ENCODE measurements at regions of chr6 and their contacts with region 1.

Region 1: GRCh38 chr6:97186416-97186999 is 96.5 kb downstream of the MMS22L start:
- DNase-seq: peak; percentile 85
- H3K4me3 ChIP-seq: no peak overlapping the region
- H3K27ac ChIP-seq: no peak overlapping the region
- H3K4me1 ChIP-seq: peaks cover 36% of the 10 kb centered on the region
- H3K27me3 ChIP-seq: no peaks in the 10 kb centered on the region
- CTCF ChIP-seq: peak; percentile 96

Region 2: DNA sequence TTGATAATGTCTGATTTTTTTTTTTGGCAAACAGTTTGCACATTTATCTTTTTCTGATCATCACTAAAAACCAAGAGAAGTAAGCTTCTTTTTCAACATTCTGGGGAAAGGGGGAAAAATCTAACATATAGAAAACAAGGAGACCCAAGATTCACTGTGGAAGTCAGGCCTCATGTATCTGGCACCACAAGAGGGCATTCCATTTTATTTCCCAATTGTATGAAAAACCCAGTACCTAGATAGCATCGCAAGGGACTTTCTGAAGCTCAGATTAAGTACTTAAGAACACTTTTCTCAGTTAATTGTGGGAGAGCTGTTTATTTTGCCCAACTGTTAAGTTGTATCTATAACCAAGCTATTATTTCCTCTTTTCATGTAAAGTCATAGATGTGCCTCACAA is 109.1 kb before region 1 on chr6:
- CTCF ChIA-PET with region 1: no interaction called
- POLR2A ChIA-PET with region 1: no interaction called
- intact Hi-C with region 1: loop called (anchors 10 kb)
- DNase-seq: peak; percentile 24
- H3K4me3 ChIP-seq: no peak overlapping the region
- H3K27ac ChIP-seq: no peak overlapping the region
- H3K4me1 ChIP-seq: peaks cover 16% of the 10 kb centered on the region
- H3K27me3 ChIP-seq: no peaks in the 10 kb centered on the region
- CTCF ChIP-seq: peak; percentile 40

Region 3: GRCh38 chr6:97215157-97215769 is 28.8 kb after region 1 on chr6:
- CTCF ChIA-PET with region 1: interaction called, 15 read pairs
- POLR2A ChIA-PET with region 1: interaction called, 5 read pairs
- intact Hi-C with region 1: no loop called
- DNase-seq: peak; percentile 88
- H3K4me3 ChIP-seq: peak overlapping the region; percentile 3
- H3K27ac ChIP-seq: peak overlapping the region; percentile 57
- H3K4me1 ChIP-seq: peaks cover 20% of the 10 kb centered on the region
- H3K27me3 ChIP-seq: no peaks in the 10 kb centered on the region
- CTCF ChIP-seq: peak; percentile 78

Region 4: GRCh38 chr6:97394160-97394748 is 207.7 kb after region 1 on chr6:
- CTCF ChIA-PET with region 1: no interaction called
- POLR2A ChIA-PET with region 1: no interaction called
- intact Hi-C with region 1: loop called (anchors 1 kb)
- DNase-seq: peak; percentile 81
- H3K4me3 ChIP-seq: no peak overlapping the region
- H3K27ac ChIP-seq: no peak overlapping the region
- H3K4me1 ChIP-seq: no peaks in the 10 kb centered on the region
- H3K27me3 ChIP-seq: no peaks in the 10 kb centered on the region
- CTCF ChIP-seq: peak; percentile 89

Region 5: GRCh38 chr6:97497713-97498331 is 311.3 kb after region 1 on chr6:
- CTCF ChIA-PET with region 1: no interaction called
- POLR2A ChIA-PET with region 1: no interaction called
- intact Hi-C with region 1: loop called (anchors 10 kb)
- DNase-seq: peak; percentile 93
- H3K4me3 ChIP-seq: no peak overlapping the region
- H3K27ac ChIP-seq: peak overlapping the region; percentile 76
- H3K4me1 ChIP-seq: peaks cover 34% of the 10 kb centered on the region
- H3K27me3 ChIP-seq: no peaks in the 10 kb centered on the region
- CTCF ChIP-seq: peak; percentile 93

Region 6: DNA sequence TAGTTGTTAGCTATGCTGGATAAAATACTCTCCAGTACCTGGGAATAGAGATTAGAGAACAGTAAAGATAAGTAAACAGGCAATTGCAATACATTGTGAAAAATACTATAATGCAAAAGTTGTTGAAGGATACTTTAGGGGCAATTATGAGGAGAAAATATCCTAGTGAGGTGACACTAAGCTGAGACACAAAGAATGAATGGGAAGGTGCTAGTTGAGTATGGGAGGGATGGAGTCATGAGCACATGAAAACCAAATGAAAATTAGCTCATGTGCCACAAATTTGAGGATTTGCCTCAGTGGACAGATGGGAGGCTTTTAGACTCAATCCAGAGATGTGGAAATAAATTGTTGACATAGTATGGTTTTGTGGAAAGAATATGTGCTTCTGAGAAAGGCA is 467.0 kb after region 1 on chr6:
- CTCF ChIA-PET with region 1: no interaction called
- POLR2A ChIA-PET with region 1: interaction called, 3 read pairs
- intact Hi-C with region 1: loop called (anchors 2 kb)
- DNase-seq: peak; percentile 86
- H3K4me3 ChIP-seq: no peak overlapping the region
- H3K27ac ChIP-seq: peak overlapping the region; percentile 84
- H3K4me1 ChIP-seq: peaks cover 30% of the 10 kb centered on the region
- H3K27me3 ChIP-seq: no peaks in the 10 kb centered on the region
- CTCF ChIP-seq: no peak

Region 7: DNA sequence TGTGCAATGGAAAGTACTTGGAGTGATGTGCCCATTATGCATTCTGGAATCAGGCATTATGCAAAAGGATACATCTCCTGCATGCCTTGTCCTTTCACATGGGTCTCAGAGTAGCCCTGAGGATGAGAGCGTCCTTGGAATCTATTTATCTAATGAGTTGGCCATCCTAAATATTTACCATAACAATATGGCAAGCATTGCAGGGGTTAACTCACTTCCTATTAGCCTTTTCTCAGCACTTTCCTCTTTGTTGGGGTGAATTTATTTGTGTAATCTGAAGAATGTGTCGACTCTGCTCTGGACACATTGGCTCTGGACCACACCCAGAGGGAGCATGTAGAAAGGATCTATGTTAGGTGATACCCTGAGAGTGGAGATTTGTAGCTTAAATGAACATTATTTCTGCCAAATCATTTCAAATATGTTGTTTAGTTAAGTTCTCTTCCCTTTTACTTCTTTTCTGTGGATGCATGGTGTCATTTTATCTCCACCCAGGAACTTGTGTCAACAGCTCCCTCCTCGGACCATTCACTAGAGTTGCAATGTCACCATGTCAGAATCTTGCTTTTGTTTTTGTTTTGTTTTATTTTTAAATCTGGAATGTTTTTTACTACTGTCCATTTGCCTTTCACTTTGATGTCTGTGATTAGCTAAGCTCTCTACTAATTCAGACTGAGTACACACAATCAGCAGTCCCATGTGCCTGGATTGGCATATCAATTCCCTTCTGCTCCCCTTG is 853.5 kb after region 1 on chr6:
- CTCF ChIA-PET with region 1: no interaction called
- POLR2A ChIA-PET with region 1: no interaction called
- intact Hi-C with region 1: loop called (anchors 10 kb)
- DNase-seq: peak; percentile 63
- H3K4me3 ChIP-seq: no peak overlapping the region
- H3K27ac ChIP-seq: no peak overlapping the region
- H3K4me1 ChIP-seq: peaks cover 9% of the 10 kb centered on the region
- H3K27me3 ChIP-seq: no peaks in the 10 kb centered on the region
- CTCF ChIP-seq: peak; percentile 81

Measured in A673 (cell line).